Endothelial cell of umbilical vein (primary cell): ENCODE measurements at regions of chr4 and their contacts with region 1.

Region 1: DNA sequence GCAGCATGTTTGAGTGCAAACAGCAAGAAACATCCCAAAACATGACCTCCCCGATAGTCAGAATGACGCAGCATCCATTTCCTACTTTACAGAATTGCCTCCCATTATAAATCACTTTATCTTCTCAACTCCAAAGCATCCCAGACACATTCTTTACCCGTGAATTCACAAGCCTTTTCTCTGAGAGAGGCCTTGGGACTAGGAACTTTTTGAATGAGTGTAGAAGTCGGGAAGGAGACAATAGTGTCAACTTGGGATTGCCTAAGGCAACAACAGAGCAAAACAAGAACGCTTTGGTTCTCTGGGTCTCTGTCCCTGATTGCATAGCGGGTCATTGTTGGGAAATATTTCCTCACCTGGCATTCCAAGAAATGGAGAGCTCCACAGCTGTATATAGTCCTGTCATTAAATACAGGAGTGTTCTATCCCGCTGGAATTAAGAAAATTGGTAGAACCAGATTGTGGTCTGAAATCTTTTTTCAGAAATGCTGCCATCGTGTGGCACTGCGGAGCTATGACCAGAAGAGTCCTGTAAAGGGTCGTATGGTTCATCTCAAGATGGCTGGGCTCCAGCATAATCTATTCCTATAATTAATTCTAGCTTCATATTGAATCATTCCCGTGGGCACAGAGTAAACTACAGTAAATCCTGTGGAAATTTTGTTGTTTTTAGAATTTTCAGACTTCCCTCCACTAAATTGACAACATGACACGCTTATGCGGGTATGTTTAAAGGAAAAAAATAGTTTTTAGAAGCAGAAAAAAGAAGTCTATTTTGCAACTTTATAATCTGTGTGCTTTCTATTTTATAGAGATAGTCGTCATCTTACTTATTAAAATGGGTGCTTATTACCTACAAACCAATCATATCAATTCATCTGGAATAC is 2.0 kb upstream of the SPP1 start:
- DNase-seq: peak; percentile 78
- H3K4me3 ChIP-seq: peak overlapping the region in 1 of 3 experiments; percentile 39
- H3K27ac ChIP-seq: peak overlapping the region; percentile 69
- H3K4me1 ChIP-seq: peaks cover 13% of the 10 kb centered on the region
- H3K27me3 ChIP-seq: no peaks in the 10 kb centered on the region
- CTCF ChIP-seq: peak; percentile 76 to 80
- POLR2A ChIP-seq: no peak

Region 2: DNA sequence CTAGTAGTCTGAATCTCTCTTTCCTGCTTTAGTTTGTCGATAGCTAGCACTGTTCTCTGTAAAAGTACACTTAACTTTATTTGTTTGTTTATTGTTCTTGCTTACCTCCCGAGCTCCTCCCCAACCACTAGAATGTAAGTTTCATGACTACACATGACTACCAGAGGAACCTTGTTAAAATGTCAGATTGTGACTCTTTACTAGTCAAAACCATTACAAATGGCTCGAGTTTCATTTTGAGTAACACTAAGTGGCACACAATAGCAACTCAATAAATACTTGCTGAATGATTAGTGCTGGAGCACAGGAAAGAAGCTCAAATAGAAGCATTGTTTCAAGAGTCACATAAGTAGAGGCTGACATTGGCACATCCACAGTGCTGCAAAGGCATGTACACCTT is 1729.8 kb before region 1 on chr4:
- CTCF ChIA-PET with region 1: no interaction called
- POLR2A ChIA-PET with region 1: no interaction called
- dilution Hi-C with region 1: no loop called
- intact Hi-C with region 1: no loop called
- DNase-seq: no peak
- H3K4me3 ChIP-seq: no peak overlapping the region
- H3K27ac ChIP-seq: no peak overlapping the region
- H3K4me1 ChIP-seq: no peaks in the 10 kb centered on the region
- H3K27me3 ChIP-seq: no peaks in the 10 kb centered on the region
- CTCF ChIP-seq: no peak
- POLR2A ChIP-seq: no peak

Region 3: GRCh38 chr4:87559109-87559837 is 414.3 kb before region 1 on chr4:
- CTCF ChIA-PET with region 1: no interaction called
- POLR2A ChIA-PET with region 1: no interaction called
- dilution Hi-C with region 1: no loop called
- intact Hi-C with region 1: loop called (anchors 5 kb)
- DNase-seq: no peak
- H3K4me3 ChIP-seq: no peak overlapping the region
- H3K27ac ChIP-seq: no peak overlapping the region
- H3K4me1 ChIP-seq: no peaks in the 10 kb centered on the region
- H3K27me3 ChIP-seq: no peaks in the 10 kb centered on the region
- CTCF ChIP-seq: no peak
- POLR2A ChIP-seq: no peak

Region 4: GRCh38 chr4:87865288-87865687 is 108.2 kb before region 1 on chr4:
- CTCF ChIA-PET with region 1: interaction called, 11 read pairs
- POLR2A ChIA-PET with region 1: no interaction called
- dilution Hi-C with region 1: no loop called
- intact Hi-C with region 1: no loop called
- DNase-seq: peak; percentile 45
- H3K4me3 ChIP-seq: no peak overlapping the region
- H3K27ac ChIP-seq: no peak overlapping the region
- H3K4me1 ChIP-seq: no peaks in the 10 kb centered on the region
- H3K27me3 ChIP-seq: no peaks in the 10 kb centered on the region
- CTCF ChIP-seq: no peak
- POLR2A ChIP-seq: no peak

Region 5: DNA sequence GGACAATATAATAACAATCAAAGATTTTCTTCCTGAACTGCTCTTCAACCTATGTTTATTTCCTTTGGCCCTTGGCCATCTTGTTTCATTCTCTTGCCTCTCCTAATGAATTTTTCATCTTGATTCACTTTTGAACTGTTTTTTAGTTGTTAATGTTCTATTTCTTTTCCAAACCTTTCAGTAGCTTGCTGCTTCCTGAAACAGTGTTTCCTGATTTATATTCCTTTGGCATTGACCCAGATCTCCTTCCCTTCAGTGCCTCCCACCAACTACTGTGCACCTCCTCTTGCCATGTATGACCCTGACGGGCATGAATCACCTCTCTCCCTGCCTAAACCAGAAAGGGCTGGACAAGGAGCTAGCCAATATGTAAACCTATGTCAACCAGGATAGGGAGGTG is 23.6 kb before region 1 on chr4:
- CTCF ChIA-PET with region 1: interaction called, 38 read pairs
- POLR2A ChIA-PET with region 1: no interaction called
- dilution Hi-C with region 1: no loop called
- intact Hi-C with region 1: loop called (anchors 1 kb)
- DNase-seq: peak; percentile 89
- H3K4me3 ChIP-seq: no peak overlapping the region
- H3K27ac ChIP-seq: no peak overlapping the region
- H3K4me1 ChIP-seq: peaks cover 15% of the 10 kb centered on the region
- H3K27me3 ChIP-seq: no peaks in the 10 kb centered on the region
- CTCF ChIP-seq: no peak
- POLR2A ChIP-seq: no peak

Region 6: GRCh38 chr4:88007304-88008121 is 34.0 kb after region 1 on chr4 and contains the start of gene PKD2:
- CTCF ChIA-PET with region 1: interaction called, 9 read pairs
- POLR2A ChIA-PET with region 1: no interaction called
- dilution Hi-C with region 1: no loop called
- intact Hi-C with region 1: loop called (anchors 2 kb)
- DNase-seq: peak; percentile 73
- H3K4me3 ChIP-seq: peak within 1 kb of the TSS; percentile 66 to 89 (median 88)
- H3K27ac ChIP-seq: peak within 1 kb of the TSS; percentile 68
- H3K4me1 ChIP-seq: peaks cover 23% of the 10 kb centered on the region
- H3K27me3 ChIP-seq: no peaks in the 10 kb centered on the region
- CTCF ChIP-seq: no peak
- POLR2A ChIP-seq: peak; percentile 82
- total RNA-seq, gene PKD2: 27.0 and 33.5 TPM in 2 replicates

Region 7: DNA sequence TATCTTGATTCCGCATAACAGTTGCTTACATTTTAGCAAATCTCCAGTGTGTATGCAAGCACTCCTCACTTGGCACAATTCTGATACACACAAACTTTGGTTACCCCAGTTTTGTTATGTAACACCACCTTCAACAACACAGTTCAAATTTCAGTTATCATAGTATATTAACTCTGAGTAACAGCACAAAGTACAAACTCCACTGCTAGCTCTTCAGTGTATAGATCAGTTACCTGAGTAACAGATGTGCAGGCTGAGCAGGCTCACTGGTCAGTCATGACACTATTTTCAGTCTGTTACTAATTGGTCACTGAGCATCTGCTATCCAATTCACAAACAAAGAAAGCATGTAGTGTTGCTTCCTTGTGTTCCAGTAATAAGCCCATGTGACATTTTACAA is 89.3 kb after region 1 on chr4:
- CTCF ChIA-PET with region 1: no interaction called
- POLR2A ChIA-PET with region 1: no interaction called
- dilution Hi-C with region 1: no loop called
- intact Hi-C with region 1: no loop called
- DNase-seq: no peak
- H3K4me3 ChIP-seq: no peak overlapping the region
- H3K27ac ChIP-seq: no peak overlapping the region
- H3K4me1 ChIP-seq: peaks cover 6% of the 10 kb centered on the region
- H3K27me3 ChIP-seq: no peaks in the 10 kb centered on the region
- CTCF ChIP-seq: no peak
- POLR2A ChIP-seq: no peak